Activated CD4-positive, alpha-beta T cell treated with anti-CD3 and anti-CD28 coated beads for 36 hours (primary cell): ENCODE measurements at regions of chr7 and their contacts with region 1.

Region 1: DNA sequence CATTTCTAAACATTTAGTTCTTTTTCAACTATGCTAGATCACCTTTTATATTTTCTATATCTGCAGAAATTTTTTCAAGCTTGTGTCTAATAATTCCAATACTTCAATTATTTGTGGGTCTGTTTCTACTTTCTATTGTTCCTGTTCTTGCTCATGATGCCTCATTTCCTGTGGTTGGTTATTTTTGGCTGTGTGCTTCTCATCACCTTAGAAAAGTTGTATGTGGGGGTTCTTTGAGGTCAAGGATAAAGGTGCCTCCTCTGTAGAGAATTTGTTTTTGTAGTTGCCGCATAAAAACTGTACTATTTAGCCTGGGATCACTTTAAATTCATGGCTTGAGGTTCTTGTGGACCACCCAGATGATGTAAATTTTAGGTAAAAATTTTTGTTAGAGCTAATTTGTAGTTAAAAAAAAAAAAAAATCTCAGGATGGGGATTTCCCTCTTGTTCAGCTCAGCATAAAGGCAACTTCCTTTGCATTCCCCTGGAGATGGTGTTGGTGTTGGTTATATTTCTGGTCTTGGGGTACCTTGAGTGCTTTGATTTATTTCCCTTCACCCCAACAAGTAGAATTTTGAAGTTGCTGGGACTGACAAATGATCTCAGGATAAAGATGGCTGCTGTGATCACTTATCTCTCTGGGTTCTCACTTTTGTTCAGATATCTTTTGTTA is 27.0 kb upstream of the JAZF1 start:
- DNase-seq: no peak
- ATAC-seq: peak; percentile 81
- H3K4me3 Mint-ChIP-seq: peak overlapping the region; percentile 16
- H3K27ac Mint-ChIP-seq: peak overlapping the region; percentile 18
- H3K4me1 Mint-ChIP-seq: peaks cover 38% of the 10 kb centered on the region
- H3K27me3 Mint-ChIP-seq: peaks cover 12% of the 10 kb centered on the region

Region 2: DNA sequence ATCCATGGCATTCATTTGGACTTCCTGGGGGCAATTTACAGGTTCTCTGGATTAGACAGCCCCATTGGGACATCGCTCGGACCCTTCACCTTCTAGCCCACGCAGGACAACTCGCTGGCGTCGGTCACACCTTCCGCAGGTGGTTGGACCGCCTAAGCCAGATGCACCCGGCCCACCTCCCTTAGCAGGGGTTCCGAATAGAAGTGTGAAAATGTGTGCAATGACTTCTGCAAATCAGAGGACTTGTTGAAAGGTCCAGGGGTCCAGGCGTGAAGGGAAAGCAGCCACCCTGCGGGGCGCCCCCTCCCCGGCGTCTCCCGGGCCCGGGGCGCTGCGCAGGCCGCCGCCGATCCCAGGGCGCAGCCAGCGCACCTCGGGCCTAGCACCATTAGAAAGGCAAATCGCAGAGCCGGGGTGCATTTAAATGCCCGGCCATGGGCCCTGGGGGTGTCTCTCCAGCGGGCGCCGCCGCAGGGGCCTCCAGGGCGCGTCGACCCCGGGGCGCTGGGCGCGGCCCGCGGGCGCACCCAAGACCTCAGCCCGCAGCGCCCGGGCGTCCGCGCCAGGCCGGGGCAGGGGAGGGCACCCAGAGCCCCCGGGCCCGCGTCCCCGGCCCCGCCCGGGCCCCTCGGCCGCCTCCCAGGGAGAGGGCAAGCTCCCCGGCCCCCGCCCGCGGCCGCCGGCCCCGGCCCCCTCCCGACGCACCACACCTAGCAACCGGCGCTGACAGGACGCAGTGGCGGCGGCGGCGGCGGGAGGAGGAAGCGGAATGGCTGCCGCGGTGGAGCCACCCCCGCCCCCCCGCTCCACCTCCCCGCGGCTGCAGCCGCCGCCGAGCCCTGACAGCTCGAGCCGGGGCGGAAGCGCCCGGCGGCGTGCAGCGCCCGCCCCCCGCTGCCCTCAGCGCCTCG is 28.2 kb before region 1 on chr7:
- CTCF ChIA-PET with region 1: no interaction called
- POLR2A ChIA-PET with region 1: no interaction called
- intact Hi-C with region 1: loop called in 1 of 2 experiments (anchors 2 kb)
- DNase-seq: peak; percentile 76
- ATAC-seq: peak; percentile 68
- H3K4me3 Mint-ChIP-seq: peak overlapping the region; percentile 63
- H3K27ac Mint-ChIP-seq: peak overlapping the region; percentile 55
- H3K4me1 Mint-ChIP-seq: peaks cover 40% of the 10 kb centered on the region
- H3K27me3 Mint-ChIP-seq: peaks cover 2% of the 10 kb centered on the region

Region 3: DNA sequence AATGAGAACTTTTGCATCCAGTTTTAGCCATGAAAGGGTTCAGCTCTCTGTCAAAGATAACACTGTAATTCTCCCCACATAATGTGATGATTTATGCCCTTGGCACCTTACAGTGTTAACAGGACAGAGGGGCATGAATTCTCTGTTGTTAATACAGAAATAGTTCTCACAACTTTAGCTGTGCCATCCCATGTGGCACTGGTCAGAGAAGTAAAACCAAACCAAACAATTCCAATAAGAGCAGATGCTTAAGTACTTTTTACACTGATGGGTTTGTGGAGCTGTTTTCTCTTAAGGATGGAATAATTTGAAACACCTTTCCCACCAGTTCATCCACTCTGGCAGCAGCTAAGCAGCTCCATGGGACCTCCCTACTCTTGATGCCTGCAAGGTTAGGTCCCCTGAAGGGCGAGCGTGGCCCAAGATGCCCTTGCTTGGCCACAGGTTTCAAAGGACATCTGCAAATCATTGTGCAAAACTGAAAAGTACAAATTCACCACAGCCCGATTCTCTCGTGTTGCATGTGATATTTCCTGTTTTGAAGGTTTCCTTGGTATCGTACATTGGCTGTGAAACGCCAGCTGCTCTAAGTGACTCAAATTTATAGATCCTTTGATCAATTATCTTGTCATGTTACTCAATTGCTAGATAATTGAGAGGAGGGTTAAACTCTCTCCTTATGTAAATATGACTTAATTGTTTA is 122.2 kb after region 1 on chr7:
- CTCF ChIA-PET with region 1: interaction called, 3 read pairs
- POLR2A ChIA-PET with region 1: no interaction called
- intact Hi-C with region 1: loop called (anchors 1 kb)
- DNase-seq: peak; percentile 26
- ATAC-seq: peak; percentile 56
- H3K4me3 Mint-ChIP-seq: peak overlapping the region; percentile 4
- H3K27ac Mint-ChIP-seq: no peak overlapping the region
- H3K4me1 Mint-ChIP-seq: peaks cover 36% of the 10 kb centered on the region
- H3K27me3 Mint-ChIP-seq: peaks cover 6% of the 10 kb centered on the region